ENCODE measurements at regions of chr11 and their contacts with region 1.

Region 1: GRCh38 chr11:9460322-9461067 is at the start of gene ZNF143:
- DNase-seq: peak; percentile 99 to 100 (median 100)
- ATAC-seq: peak; percentile 88
- H3K4me3 ChIP-seq: peak within 1 kb of the TSS; percentile 90
- H3K4me3 Mint-ChIP-seq: peak within 1 kb of the TSS; percentile 99
- H3K27ac ChIP-seq: peak within 1 kb of the TSS; percentile 95 to 97
- H3K27ac Mint-ChIP-seq: peak within 1 kb of the TSS; percentile 100
- H3K4me1 ChIP-seq: peaks cover 29% of the 10 kb centered on the region
- H3K4me1 Mint-ChIP-seq: peaks cover 30% of the 10 kb centered on the region
- H3K27me3 ChIP-seq: no peaks in the 10 kb centered on the region
- H3K27me3 Mint-ChIP-seq: no peaks in the 10 kb centered on the region
- CTCF ChIP-seq: no peak
- total RNA-seq, gene ZNF143: 18.0 to 20.3 TPM

Region 2: DNA sequence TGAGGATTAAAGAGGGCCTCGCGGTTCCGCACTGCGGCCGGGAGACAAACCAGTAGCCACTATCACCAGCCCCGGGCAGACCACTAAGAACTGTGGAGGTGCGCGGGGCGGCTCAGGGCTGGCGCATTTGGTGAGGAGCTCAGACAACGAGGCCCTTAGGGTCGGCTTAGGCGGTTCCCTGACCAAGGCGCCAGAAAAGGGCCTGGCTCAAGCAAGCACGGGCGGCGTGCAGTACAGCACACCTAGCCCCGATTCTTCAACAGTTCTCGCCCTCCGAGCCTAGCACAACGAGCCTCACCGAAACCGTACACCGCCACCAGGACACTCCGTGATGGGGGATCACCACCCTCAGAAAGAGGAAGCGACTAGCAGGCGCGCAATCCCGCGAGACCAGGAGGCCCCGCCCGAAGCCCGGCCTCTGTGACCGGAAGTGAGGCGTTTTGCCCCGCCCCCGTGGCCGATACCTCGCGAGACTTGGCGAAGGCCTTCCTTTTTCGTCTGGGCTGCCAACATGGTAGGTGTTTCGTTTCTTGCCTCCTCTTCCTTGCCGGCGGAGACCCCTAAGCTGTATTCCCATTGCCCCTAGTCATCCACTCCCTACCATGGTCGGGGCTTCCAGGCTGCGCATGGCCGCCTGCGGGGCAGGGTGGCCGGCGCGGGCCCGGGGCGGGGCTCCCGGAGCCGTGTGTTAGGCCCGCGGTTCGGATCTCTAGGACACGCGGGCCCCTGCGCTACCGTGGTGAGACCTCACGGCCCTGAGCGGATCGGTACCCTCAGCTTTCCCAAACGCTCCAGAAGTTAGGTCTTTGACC is 778.0 kb before region 1 on chr11 and contains the starts of genes RPL27A and TRIM66:
- CTCF ChIA-PET with region 1: no interaction called
- POLR2A ChIA-PET with region 1: interaction called, 14 read pairs
- intact Hi-C with region 1: loop called in 1 of 2 experiments (anchors 10 kb)
- DNase-seq: peak; percentile 97 to 100 (median 99)
- ATAC-seq: peak; percentile 94
- H3K4me3 ChIP-seq: peak within 1 kb of the TSS; percentile 93
- H3K4me3 Mint-ChIP-seq: peak within 1 kb of the TSS; percentile 99
- H3K27ac ChIP-seq: peak within 1 kb of the TSS; percentile 92 to 96
- H3K27ac Mint-ChIP-seq: peak within 1 kb of the TSS; percentile 99
- H3K4me1 ChIP-seq: peaks cover 29% of the 10 kb centered on the region
- H3K4me1 Mint-ChIP-seq: peaks cover 52% of the 10 kb centered on the region
- H3K27me3 ChIP-seq: no peaks in the 10 kb centered on the region
- H3K27me3 Mint-ChIP-seq: no peaks in the 10 kb centered on the region
- CTCF ChIP-seq: no peak
- total RNA-seq, gene RPL27A: 1,667 to 1,721 TPM
- total RNA-seq, gene TRIM66: 6.8 to 9.8 TPM

Region 3: DNA sequence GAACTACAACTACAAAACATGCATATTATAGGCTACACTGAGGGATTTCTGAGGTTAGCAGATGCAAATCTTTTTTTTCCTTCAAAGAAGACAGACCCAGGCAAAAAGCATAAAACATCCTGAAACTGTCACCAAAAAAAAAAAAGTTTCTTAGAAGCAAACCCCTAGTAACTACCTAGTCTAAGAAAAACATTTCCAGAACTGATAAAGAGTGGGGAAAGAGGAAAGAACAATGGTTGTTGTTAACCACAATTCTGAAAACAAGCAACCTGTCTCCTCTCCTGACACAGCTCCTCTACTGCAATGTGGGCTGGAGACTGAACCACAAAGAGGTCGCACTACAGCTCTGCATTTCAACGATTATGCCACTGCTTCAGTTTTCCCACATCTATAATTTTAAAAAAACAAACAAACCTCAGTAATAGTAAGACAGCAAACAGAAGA is 210.3 kb before region 1 on chr11:
- CTCF ChIA-PET with region 1: no interaction called
- POLR2A ChIA-PET with region 1: interaction called, 10 read pairs
- intact Hi-C with region 1: loop called in 1 of 2 experiments (anchors 5 kb)
- DNase-seq: peak in 10 of 14 experiments; percentile 3 to 82 (median 38)
- ATAC-seq: peak; percentile 89
- H3K4me3 ChIP-seq: no peak overlapping the region
- H3K4me3 Mint-ChIP-seq: peak overlapping the region; percentile 64
- H3K27ac ChIP-seq: peak overlapping the region in 1 of 2 donors; percentile 25
- H3K27ac Mint-ChIP-seq: peak overlapping the region; percentile 72
- H3K4me1 ChIP-seq: peaks cover 67% of the 10 kb centered on the region
- H3K4me1 Mint-ChIP-seq: peaks cover 73% of the 10 kb centered on the region
- H3K27me3 ChIP-seq: no peaks in the 10 kb centered on the region
- H3K27me3 Mint-ChIP-seq: no peaks in the 10 kb centered on the region
- CTCF ChIP-seq: no peak

Region 4: DNA sequence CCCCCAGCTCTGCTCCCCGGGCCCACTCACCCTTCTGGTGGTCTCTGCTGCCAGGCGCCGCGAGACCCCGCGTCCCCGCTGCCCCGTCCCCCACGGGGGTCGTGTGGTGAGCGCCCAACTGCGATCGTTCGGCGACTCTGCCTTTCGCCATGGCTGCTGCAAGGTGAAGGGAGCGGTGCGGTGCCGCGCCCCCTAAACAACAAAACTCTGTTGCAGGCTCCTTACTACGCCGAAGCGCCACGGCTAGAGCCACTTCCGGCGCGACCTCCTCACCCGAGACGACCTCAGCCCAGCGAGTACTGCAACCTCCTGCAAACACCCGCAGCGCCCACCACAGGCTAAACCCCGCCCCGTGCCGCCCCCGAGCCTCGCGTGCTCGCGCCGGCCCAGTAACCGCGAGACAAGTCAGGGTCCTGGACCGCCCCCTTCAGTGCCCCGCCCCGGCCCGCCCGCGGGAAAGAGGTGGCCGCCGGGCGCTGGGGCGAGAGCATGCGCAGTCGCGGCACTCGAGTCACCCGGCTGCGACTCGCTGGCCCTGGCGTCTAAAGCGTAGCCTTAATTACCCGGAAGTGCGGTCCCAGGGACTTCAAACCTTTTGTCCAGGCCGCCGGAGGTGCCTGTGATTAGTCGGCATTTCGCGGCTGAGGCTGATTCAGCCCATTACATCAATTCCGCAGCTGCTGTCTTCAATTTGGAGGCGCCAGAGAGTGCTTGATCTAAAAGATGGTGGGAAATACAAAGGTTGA is 146.0 kb before region 1 on chr11 and contains the start of gene TMEM41B:
- CTCF ChIA-PET with region 1: interaction called, 3 read pairs
- POLR2A ChIA-PET with region 1: interaction called, 60 read pairs
- intact Hi-C with region 1: loop called (anchors 1 to 2 kb)
- DNase-seq: peak; percentile 97 to 100 (median 99)
- ATAC-seq: peak; percentile 93
- H3K4me3 ChIP-seq: peak within 1 kb of the TSS; percentile 86
- H3K4me3 Mint-ChIP-seq: peak within 1 kb of the TSS; percentile 97
- H3K27ac ChIP-seq: peak within 1 kb of the TSS; percentile 88 to 92
- H3K27ac Mint-ChIP-seq: peak within 1 kb of the TSS; percentile 96
- H3K4me1 ChIP-seq: peaks cover 22% of the 10 kb centered on the region
- H3K4me1 Mint-ChIP-seq: peaks cover 49% of the 10 kb centered on the region
- H3K27me3 ChIP-seq: no peaks in the 10 kb centered on the region
- H3K27me3 Mint-ChIP-seq: peaks cover 19% of the 10 kb centered on the region
- CTCF ChIP-seq: no peak
- total RNA-seq, gene TMEM41B: 41.4 to 42.7 TPM

Region 5: DNA sequence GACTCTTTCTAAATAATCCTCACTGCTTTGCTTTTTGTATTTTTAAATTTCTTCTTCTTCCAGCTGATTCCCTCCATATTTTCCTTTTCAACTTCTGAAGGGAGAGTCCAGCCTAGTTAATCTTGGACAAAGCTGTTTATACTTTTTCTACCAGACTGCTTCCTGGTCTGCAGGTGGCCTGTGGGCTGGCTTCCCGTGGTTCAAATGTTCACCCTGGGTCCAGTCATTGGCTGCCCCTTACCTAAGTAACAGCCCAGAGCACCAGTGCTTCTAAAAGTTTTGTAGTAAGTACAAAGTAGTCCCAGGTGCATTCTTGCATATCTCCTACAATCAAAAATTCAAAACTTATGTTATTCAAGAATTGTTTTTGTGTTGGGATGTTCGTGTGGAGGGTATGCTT is 19.4 kb after region 1 on chr11:
- CTCF ChIA-PET with region 1: no interaction called
- POLR2A ChIA-PET with region 1: interaction called, 10 read pairs
- intact Hi-C with region 1: no loop called
- DNase-seq: no peak
- ATAC-seq: no peak
- H3K4me3 ChIP-seq: no peak overlapping the region
- H3K4me3 Mint-ChIP-seq: no peak overlapping the region
- H3K27ac ChIP-seq: no peak overlapping the region
- H3K27ac Mint-ChIP-seq: no peak overlapping the region
- H3K4me1 ChIP-seq: no peaks in the 10 kb centered on the region
- H3K4me1 Mint-ChIP-seq: no peaks in the 10 kb centered on the region
- H3K27me3 ChIP-seq: no peaks in the 10 kb centered on the region
- H3K27me3 Mint-ChIP-seq: no peaks in the 10 kb centered on the region
- CTCF ChIP-seq: no peak

Region 6: DNA sequence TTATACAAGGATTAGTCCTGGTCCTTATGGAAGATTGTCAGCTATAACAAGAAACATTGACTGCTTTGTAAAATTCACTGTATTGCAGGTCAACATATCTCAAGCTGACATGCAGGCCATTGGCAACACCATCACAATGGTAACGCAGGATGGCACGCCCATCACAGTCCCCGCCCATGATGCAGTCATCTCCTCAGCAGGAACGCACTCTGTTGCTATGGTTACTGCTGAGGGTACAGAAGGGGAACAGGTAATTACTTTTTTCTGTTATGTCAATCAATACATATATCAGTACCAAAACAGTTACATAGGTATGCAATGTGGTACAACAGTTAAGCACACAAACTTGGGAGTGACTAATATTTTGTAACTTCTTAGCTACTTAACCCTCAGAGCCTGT is 55.6 kb after region 1 on chr11:
- CTCF ChIA-PET with region 1: no interaction called
- POLR2A ChIA-PET with region 1: no interaction called
- intact Hi-C with region 1: no loop called
- DNase-seq: peak in 1 of 14 experiments; percentile 10
- ATAC-seq: no peak
- H3K4me3 ChIP-seq: no peak overlapping the region
- H3K4me3 Mint-ChIP-seq: no peak overlapping the region
- H3K27ac ChIP-seq: no peak overlapping the region
- H3K27ac Mint-ChIP-seq: no peak overlapping the region
- H3K4me1 ChIP-seq: no peaks in the 10 kb centered on the region
- H3K4me1 Mint-ChIP-seq: no peaks in the 10 kb centered on the region
- H3K27me3 ChIP-seq: no peaks in the 10 kb centered on the region
- H3K27me3 Mint-ChIP-seq: no peaks in the 10 kb centered on the region
- CTCF ChIP-seq: no peak

Region 7: DNA sequence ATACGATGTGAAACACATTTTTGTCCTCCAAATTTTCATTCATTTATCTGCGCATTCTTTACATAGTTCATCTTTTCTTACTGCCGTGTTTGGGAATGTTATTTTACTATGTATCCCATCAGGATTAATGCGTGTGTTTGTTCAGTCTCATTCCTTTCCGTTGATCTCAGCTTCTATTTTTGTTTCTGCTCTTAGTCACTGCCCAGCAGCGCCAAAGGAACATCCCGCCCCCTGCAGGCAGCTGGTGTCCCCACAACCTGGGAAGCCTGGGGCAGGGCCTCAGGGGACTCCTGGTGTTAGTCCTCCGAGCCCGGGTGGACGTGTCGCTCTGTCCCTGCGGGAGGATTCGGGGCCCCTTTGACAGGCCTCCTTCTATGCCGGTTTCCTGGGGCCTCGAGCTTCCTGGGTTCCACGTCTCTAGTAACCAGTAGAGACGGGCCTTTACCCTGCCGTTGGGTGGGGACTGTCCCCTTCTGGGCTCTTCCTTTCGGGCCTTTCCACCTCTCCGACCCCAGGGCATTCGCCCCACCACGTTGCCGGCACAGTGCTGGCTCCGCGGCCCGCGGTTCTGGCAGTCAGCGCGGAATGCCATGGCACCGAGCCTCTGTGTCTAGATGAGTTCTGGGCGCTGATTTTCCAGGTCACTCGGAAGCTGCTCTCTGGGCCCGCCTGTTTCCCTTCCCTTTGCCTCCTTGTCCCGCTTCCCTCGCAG is 152.8 kb after region 1 on chr11:
- CTCF ChIA-PET with region 1: no interaction called
- POLR2A ChIA-PET with region 1: interaction called, 15 read pairs
- intact Hi-C with region 1: no loop called
- DNase-seq: peak; percentile 74 to 90 (median 82)
- ATAC-seq: peak; percentile 46
- H3K4me3 ChIP-seq: peak overlapping the region; percentile 66
- H3K4me3 Mint-ChIP-seq: peak overlapping the region; percentile 95
- H3K27ac ChIP-seq: peak overlapping the region; percentile 71 to 86
- H3K27ac Mint-ChIP-seq: peak overlapping the region; percentile 89
- H3K4me1 ChIP-seq: peaks cover 19% of the 10 kb centered on the region
- H3K4me1 Mint-ChIP-seq: peaks cover 16% of the 10 kb centered on the region
- H3K27me3 ChIP-seq: no peaks in the 10 kb centered on the region
- H3K27me3 Mint-ChIP-seq: no peaks in the 10 kb centered on the region
- CTCF ChIP-seq: peak; percentile 84

Region 8: GRCh38 chr11:10012068-10012467 is 551.6 kb after region 1 on chr11:
- CTCF ChIA-PET with region 1: no interaction called
- POLR2A ChIA-PET with region 1: no interaction called
- intact Hi-C with region 1: no loop called
- DNase-seq: no peak
- ATAC-seq: no peak
- H3K4me3 ChIP-seq: no peak overlapping the region
- H3K4me3 Mint-ChIP-seq: no peak overlapping the region
- H3K27ac ChIP-seq: no peak overlapping the region
- H3K27ac Mint-ChIP-seq: no peak overlapping the region
- H3K4me1 ChIP-seq: no peaks in the 10 kb centered on the region
- H3K4me1 Mint-ChIP-seq: no peaks in the 10 kb centered on the region
- H3K27me3 ChIP-seq: no peaks in the 10 kb centered on the region
- H3K27me3 Mint-ChIP-seq: no peaks in the 10 kb centered on the region
- CTCF ChIP-seq: no peak